ENCODE measurements at regions of chr2 and their contacts with region 1.

Region 1: DNA sequence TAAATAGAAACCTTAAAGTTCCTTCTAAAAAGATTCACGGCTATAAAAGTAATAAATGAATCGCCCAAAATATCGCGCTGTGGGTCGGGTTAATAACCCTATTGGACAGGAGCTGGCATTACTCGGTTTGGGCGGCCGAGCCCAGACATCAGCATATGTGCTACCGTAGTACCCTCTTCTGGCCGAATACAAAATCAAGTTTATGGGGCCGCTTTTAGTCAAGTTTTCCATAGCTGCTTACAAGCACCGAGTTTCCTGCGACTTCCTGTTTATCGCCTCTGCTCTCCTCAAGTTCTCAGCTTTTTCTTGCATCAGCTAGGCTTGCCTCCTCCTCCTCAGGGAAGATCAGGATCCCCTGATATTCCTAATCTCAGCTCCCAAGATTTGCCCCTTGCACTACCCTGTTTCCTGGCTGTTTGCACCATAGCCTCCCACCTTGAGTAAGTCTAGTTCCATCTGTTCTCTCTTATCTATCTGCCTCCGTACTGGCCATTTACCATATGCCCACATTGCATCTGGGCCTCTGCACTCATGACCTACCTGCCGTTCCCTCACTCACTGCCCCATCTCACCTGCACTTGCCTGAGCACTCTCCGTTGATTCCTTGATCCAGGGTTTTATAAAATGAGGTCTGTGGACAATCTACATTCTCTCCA is 56.1 kb downstream of the SLC35F5 start:
- DNase-seq: peak; percentile 62
- H3K4me3 Mint-ChIP-seq: peak overlapping the region; percentile 38
- H3K27ac Mint-ChIP-seq: peak overlapping the region; percentile 14
- H3K4me1 Mint-ChIP-seq: peaks cover 22% of the 10 kb centered on the region
- H3K27me3 Mint-ChIP-seq: no peaks in the 10 kb centered on the region

Region 2: DNA sequence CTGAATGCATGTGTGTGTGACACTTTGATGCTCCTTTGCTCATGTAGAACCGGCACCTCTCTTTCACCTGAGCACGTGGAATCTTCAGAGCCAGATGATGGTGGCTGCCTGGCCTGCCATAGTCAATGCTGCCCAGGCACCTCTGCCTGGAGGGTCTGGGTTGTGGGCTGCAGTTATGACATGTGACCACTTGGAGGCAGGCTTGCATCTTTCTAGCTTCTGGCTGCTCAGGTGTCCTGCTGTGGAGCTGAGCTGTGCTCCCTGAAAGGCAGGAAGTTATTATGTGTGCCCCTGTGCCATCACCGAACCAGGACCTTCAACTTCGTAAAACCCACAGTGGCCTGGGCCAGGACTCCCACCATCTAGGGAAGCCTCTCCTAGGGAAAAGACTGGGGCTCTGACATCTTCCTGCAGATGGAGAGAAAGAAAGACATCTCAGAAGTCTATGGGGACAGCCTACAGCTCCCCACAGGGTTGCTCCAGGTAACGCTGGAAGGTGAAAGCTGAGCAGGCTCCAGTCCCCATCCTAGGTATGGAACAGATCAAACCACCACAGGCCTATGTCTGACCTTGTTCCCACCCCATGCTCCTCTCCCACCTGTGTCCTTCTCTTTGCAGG is 496.3 kb before region 1 on chr2:
- CTCF ChIA-PET with region 1: no interaction called
- POLR2A ChIA-PET with region 1: no interaction called
- DNase-seq: peak; percentile 80
- H3K4me3 Mint-ChIP-seq: no peak overlapping the region
- H3K27ac Mint-ChIP-seq: peak overlapping the region; percentile 65
- H3K4me1 Mint-ChIP-seq: peaks cover 12% of the 10 kb centered on the region
- H3K27me3 Mint-ChIP-seq: no peaks in the 10 kb centered on the region

Region 3: GRCh38 chr2:113602869-113603466 is 97.3 kb before region 1 on chr2:
- CTCF ChIA-PET with region 1: interaction called, 23 read pairs
- POLR2A ChIA-PET with region 1: no interaction called
- DNase-seq: no peak
- H3K4me3 Mint-ChIP-seq: peak overlapping the region; percentile 90
- H3K27ac Mint-ChIP-seq: peak overlapping the region; percentile 94
- H3K4me1 Mint-ChIP-seq: peaks cover 7% of the 10 kb centered on the region
- H3K27me3 Mint-ChIP-seq: no peaks in the 10 kb centered on the region